A549 (cell line): ENCODE measurements at regions of chr10 and their contacts with region 1.

Region 1: GRCh38 chr10:2978111-2978510 is 89.2 kb upstream of the PFKP start:
- DNase-seq: peak; percentile 62 to 75
- ATAC-seq: peak; percentile 84 to 90; a peak in 4 of 6 replicates
- H3K4me3 ChIP-seq: no peak overlapping the region
- H3K27ac ChIP-seq: no peak overlapping the region
- H3K4me1 ChIP-seq: peaks cover 14% of the 10 kb centered on the region
- CTCF ChIP-seq: peak; percentile 71
- EP300 ChIP-seq: no peak
- POLR2A ChIP-seq: no peak
- RAD21 ChIP-seq: peak; percentile 83 to 90

Region 2: GRCh38 chr10:2410049-2410448 is 568.1 kb before region 1 on chr10:
- CTCF ChIA-PET with region 1: no interaction called
- POLR2A ChIA-PET with region 1: no interaction called
- DNase-seq: no peak
- ATAC-seq: no peak
- H3K4me3 ChIP-seq: no peak overlapping the region
- H3K27ac ChIP-seq: no peak overlapping the region
- H3K4me1 ChIP-seq: no peaks in the 10 kb centered on the region
- CTCF ChIP-seq: no peak
- EP300 ChIP-seq: no peak
- POLR2A ChIP-seq: no peak
- RAD21 ChIP-seq: no peak

Region 3: DNA sequence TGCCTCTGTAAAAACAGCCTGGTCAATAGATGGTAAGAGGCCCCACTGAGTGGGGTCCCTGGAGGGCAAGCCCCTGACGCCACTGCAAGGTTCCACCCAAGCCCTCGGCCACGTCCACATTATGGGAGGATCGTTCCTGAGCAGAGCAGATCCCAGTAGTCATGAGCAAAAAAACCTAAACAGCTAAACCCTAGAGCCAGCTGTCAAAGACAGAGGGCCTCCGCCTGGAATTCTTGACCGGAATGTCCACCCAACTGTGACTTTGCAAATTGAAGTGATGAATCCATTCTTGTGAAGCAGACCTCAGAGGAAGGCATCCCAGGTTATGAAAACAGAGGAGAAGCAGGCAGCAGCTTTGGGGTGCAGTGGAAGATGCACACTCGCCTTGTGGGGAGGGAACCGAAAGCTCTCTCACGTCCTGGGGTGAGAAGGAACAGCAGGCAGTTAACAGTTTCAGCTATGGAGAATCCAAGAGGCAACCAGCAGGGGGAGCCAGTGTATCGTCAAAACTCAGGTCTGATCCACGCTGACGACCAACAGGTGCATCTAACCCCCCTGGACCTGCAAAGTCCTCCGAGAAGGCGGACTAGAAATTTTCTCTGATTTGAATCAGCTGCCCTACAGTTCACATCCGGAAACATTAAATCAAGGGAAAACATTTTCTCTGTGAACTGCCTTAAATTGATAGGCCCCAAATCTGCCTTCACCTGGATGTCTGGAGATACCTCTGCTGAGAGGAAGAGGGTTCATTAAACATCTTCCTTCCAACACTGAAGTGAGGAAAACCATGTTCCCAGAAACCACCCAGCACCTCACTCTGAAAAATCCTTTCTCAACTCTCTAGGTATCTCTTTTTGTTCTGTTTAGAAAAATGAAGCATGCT is 49.9 kb before region 1 on chr10:
- CTCF ChIA-PET with region 1: interaction called, 26 read pairs
- POLR2A ChIA-PET with region 1: no interaction called
- DNase-seq: peak; percentile 71 to 92
- ATAC-seq: peak; percentile 91 to 95
- H3K4me3 ChIP-seq: no peak overlapping the region
- H3K27ac ChIP-seq: no peak overlapping the region
- H3K4me1 ChIP-seq: peaks cover under 1% of the 10 kb centered on the region; the same call in 2 of the 3 replicates
- CTCF ChIP-seq: peak; percentile 86
- EP300 ChIP-seq: no peak
- POLR2A ChIP-seq: no peak
- RAD21 ChIP-seq: peak; percentile 90 to 93

Region 4: GRCh38 chr10:2938869-2939268 is 39.2 kb before region 1 on chr10:
- CTCF ChIA-PET with region 1: interaction called, 14 read pairs
- POLR2A ChIA-PET with region 1: no interaction called
- DNase-seq: peak in 1 of 2 experiments; percentile 31
- ATAC-seq: peak; percentile 71 to 73
- H3K4me3 ChIP-seq: no peak overlapping the region
- H3K27ac ChIP-seq: no peak overlapping the region
- H3K4me1 ChIP-seq: peaks cover 3% of the 10 kb centered on the region; the same call in 2 of the 3 replicates
- CTCF ChIP-seq: peak; percentile 51; the same call in 2 of the 3 replicates
- EP300 ChIP-seq: no peak
- POLR2A ChIP-seq: no peak
- RAD21 ChIP-seq: peak; percentile 51 to 61; a peak in 4 of 5 replicates

Region 5: DNA sequence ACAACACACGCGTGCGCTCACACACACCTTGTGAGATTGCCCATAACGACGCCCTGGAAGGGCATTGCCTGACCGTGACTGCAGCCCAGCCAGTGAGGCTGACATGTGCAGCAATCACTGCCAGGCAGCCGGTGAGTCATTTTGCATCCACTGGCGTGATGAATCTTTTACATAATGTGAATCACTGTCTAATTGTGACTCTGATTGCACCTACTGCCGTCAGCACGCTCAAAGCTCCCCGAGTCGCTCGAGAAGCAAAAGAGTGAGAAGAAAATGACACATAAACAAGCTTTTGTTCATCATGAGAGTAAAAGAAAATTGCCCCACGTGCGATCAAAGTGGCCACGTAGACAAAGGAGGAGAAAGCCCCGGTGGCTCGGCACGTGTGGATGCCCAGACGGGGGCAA is 28.2 kb before region 1 on chr10:
- CTCF ChIA-PET with region 1: interaction called, 15 read pairs
- POLR2A ChIA-PET with region 1: no interaction called
- DNase-seq: peak; percentile 26 to 27
- ATAC-seq: peak; percentile 82 to 86
- H3K4me3 ChIP-seq: peak overlapping the region; percentile 34
- H3K27ac ChIP-seq: peak overlapping the region in 1 of 2 experiments; percentile 9; a peak in 3 of 6 replicates
- H3K4me1 ChIP-seq: peaks cover 10% of the 10 kb centered on the region
- CTCF ChIP-seq: no peak
- EP300 ChIP-seq: no peak
- POLR2A ChIP-seq: no peak
- RAD21 ChIP-seq: no peak

Region 6: GRCh38 chr10:2992401-2993198 is 14.5 kb after region 1 on chr10:
- CTCF ChIA-PET with region 1: interaction called, 11 read pairs
- POLR2A ChIA-PET with region 1: no interaction called
- DNase-seq: no peak
- ATAC-seq: no peak; a peak in 1 of 6 replicates
- H3K4me3 ChIP-seq: no peak overlapping the region
- H3K27ac ChIP-seq: no peak overlapping the region
- H3K4me1 ChIP-seq: peaks cover 11% of the 10 kb centered on the region; the same call in 2 of the 3 replicates
- CTCF ChIP-seq: peak; percentile 37; the same call in 2 of the 3 replicates
- EP300 ChIP-seq: no peak
- POLR2A ChIP-seq: no peak
- RAD21 ChIP-seq: no peak